BJ (cell line): ENCODE measurements at regions of chr9 and their contacts with region 1.

Region 1: GRCh38 chr9:127943731-127944144 is 6.1 kb upstream of the DPM2 start:
- DNase-seq: no peak
- H3K4me3 ChIP-seq: no peak overlapping the region
- H3K27me3 ChIP-seq: no peaks in the 10 kb centered on the region
- CTCF ChIP-seq: peak; percentile 98

Region 2: GRCh38 chr9:127676636-127677035 is 267.1 kb before region 1 on chr9:
- CTCF ChIA-PET with region 1: no interaction called
- POLR2A ChIA-PET with region 1: no interaction called
- DNase-seq: no peak
- H3K4me3 ChIP-seq: no peak overlapping the region
- H3K27me3 ChIP-seq: no peaks in the 10 kb centered on the region
- CTCF ChIP-seq: no peak

Region 3: GRCh38 chr9:127955294-127956035 is 11.7 kb after region 1 on chr9:
- CTCF ChIA-PET with region 1: interaction called, 56 read pairs
- POLR2A ChIA-PET with region 1: no interaction called
- DNase-seq: no peak
- H3K4me3 ChIP-seq: no peak overlapping the region
- H3K27me3 ChIP-seq: no peaks in the 10 kb centered on the region
- CTCF ChIP-seq: no peak

Region 4: GRCh38 chr9:127980706-127981558 is 37.2 kb after region 1 on chr9 and contains the start of gene EEIG1:
- CTCF ChIA-PET with region 1: interaction called, 64 read pairs
- POLR2A ChIA-PET with region 1: no interaction called
- DNase-seq: no peak
- H3K4me3 ChIP-seq: peak within 1 kb of the TSS; percentile 68
- H3K27me3 ChIP-seq: no peaks in the 10 kb centered on the region
- CTCF ChIP-seq: no peak
- polyA plus RNA-seq, gene EEIG1: 7.3 and 26.6 TPM in 2 replicates

Region 5: GRCh38 chr9:128020692-128021091 is 77.0 kb after region 1 on chr9:
- CTCF ChIA-PET with region 1: interaction called, 342 read pairs
- POLR2A ChIA-PET with region 1: no interaction called
- DNase-seq: no peak
- H3K4me3 ChIP-seq: no peak overlapping the region
- H3K27me3 ChIP-seq: no peaks in the 10 kb centered on the region
- CTCF ChIP-seq: peak; percentile 31

Region 6: GRCh38 chr9:128084746-128085145 is 141.0 kb after region 1 on chr9:
- CTCF ChIA-PET with region 1: interaction called, 12 read pairs
- POLR2A ChIA-PET with region 1: no interaction called
- DNase-seq: no peak
- H3K4me3 ChIP-seq: no peak overlapping the region
- H3K27me3 ChIP-seq: no peaks in the 10 kb centered on the region
- CTCF ChIP-seq: no peak

Region 7: DNA sequence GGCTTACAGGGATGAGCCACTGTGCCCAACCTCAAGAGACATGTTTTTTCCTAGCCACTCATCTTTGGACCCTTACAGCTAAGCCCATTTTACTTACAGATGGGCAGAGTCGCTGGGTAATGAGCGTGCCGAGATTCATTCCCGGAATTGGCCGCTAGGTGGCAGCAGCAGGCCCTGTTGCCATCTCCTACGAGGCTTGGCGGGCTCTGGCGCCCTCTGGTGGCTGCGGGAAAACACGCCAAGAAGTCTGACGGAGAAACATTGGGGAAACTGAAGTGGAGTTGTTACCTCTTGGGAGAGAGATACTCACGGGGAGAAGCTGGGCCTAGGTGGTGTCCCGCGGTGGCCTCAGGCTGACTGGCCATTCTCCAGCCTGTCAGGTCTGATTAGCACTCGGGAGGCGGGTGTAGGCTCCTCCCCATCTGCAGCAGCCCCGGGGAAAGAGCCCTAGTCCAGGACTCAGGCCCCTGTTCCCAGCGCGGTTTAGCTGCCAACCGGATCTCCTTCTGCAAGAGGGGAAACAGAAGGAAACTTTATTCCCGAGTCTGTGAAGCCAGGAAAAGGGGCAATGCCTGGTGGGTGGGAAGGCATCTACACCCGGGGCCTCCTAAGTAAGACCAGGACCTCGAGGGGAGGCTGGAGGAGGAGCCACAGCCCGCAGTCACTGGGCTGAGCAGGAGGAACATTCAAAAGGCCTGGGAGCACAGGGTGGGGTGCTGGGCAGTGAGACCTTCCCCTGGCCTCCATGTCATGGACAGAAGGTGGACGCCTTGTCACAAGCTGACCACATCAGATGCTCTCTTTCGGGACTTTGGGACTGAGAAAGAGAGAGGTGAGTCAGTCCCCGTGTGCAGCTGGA is 174.1 kb after region 1 on chr9:
- CTCF ChIA-PET with region 1: interaction called, 58 read pairs
- POLR2A ChIA-PET with region 1: no interaction called
- DNase-seq: peak; percentile 35
- H3K4me3 ChIP-seq: no peak overlapping the region
- H3K27me3 ChIP-seq: no peaks in the 10 kb centered on the region
- CTCF ChIP-seq: peak; percentile 100